ENCODE measurements at regions of chr2 and their contacts with region 1.

Region 1: DNA sequence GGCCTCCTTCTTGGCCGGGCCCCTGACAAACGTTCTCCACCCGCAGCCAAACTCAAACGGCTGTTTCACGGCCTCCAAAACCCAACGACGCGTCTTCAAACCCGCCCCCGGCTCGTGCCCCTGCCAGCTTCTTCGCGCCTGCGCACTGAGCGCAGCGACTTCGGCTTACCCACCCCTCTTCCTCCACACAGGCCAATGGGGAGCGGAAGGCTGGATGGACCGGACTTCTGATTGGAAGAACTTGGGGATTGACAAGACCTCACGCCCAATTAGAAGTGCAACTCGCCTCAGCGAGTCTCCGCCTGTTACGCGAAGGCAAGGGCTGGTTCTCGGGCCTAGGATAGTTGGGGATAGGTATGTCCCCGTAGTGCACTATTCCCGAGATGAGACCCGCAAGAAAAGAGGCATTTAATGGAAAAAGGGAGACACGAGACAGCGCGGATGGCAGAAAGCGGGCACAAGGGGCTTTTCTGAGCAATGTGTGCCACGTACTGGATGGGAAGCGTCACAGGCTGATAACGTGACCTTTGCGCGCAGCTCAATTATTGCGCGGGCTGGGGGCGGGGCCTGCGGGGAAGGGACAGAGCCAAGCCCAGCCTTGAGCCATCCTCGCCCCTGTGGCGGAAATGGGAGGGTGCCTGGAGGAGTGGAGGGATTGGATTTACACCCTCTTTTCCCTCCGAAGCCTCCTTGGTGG is at the start of gene LAPTM4A:
- DNase-seq: peak; percentile 99
- total RNA-seq, gene LAPTM4A: 134 TPM

Region 2: DNA sequence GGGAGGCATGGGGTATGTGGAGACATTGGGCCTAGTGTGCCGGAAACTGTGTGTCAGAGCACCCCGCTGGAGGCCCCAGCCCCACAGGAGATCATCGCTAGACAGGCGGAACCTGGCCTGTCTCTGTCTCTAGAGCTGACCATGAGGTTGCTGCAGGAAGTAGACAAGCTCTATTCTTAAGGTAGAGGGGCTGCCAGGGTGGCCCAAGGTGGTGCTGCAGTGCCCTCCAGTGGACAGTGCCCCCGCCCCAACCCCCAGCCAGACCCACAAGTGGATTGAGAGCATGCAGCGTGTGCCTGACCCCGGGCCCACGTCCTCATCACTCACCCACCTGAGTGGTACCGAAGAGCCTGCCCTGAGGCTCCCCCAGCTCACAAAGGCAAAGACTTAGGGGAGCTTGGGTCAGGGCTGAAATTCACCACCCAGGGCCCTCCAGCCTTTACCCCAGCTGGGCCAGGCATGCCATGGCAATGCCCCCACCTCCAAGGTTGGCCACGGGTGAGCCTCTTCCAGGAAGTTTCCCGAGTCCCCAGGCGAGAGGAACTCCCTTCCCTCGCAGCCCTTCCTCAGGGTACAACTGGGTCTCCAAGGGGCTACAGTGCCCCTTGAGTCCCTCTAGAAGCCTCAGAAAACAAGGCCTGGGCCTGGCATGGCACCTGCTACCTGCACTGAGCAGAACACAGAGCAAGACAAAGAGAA is 304.9 kb before region 1 on chr2:
- intact Hi-C with region 1: no loop called
- DNase-seq: peak; percentile 66

Region 3: DNA sequence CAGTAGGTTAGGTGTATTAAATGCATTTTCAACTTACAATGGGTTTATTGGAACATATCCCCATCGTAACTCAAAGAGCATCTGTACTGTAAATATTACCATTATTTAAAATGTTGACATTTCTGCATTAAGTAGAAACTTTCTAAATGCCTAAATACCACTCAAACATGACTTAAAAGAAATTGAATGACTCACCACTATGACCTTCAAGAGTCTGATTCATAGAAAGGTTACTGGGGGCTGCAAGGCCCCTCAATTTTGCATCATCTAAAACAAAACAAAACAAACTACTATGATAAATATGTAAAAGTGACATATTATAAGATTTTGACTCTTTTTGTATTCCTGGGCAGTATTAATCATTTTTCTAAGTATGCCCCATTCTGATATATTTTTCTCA is 69.4 kb before region 1 on chr2:
- intact Hi-C with region 1: no loop called
- DNase-seq: no peak

Region 4: GRCh38 chr2:20071397-20072383 is 20.0 kb after region 1 on chr2:
- intact Hi-C with region 1: loop called (anchors 2 kb)
- DNase-seq: peak; percentile 72

Measured in cardiac septum (tissue), 1 donor.